Lower leg skin (tissue), 4 donors: ENCODE measurements at regions of chr18 and their contacts with region 1.

Region 1: DNA sequence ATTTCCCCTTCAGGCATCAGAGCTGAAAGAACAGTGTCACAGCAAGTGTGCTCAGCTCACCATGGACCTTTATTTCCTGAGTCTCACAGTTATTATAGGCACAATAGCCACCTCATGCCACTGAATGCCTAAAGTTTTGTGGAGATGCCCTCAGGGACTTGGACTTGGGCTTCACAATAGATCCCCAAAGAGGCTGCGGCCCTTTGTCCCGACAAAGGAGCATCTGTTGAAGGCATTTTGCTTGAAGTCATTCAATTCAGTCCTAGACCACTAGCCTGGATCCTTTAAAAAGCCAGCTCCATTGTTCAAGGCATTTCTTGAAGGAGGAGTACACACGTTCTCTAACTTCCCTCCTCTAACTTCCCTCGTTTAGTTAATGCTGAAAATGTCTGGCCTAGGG is 125.4 kb downstream of the DCC start:
- DNase-seq: no peak
- H3K4me3 ChIP-seq: no peak overlapping the region
- CTCF ChIP-seq: no peak
- POLR2A ChIP-seq: no peak

Region 2: GRCh38 chr18:53253789-53254188 is 788.4 kb after region 1 on chr18:
- intact Hi-C with region 1: loop called (anchors 5 kb)
- DNase-seq: no peak
- H3K4me3 ChIP-seq: no peak overlapping the region
- CTCF ChIP-seq: no peak
- POLR2A ChIP-seq: no peak